Activated CD8-positive, alpha-beta T cell treated with anti-CD3 and anti-CD28 coated beads for 36 hours (primary cell): ENCODE measurements at regions of chr3 and their contacts with region 1.

Region 1: GRCh38 chr3:39216176-39216790 is 23.9 kb upstream of the XIRP1 start:
- DNase-seq: no peak
- ATAC-seq: no peak
- H3K4me3 Mint-ChIP-seq: no peak overlapping the region
- H3K27ac Mint-ChIP-seq: no peak overlapping the region
- H3K4me1 Mint-ChIP-seq: peaks cover 13% of the 10 kb centered on the region
- H3K27me3 Mint-ChIP-seq: peaks cover 6% of the 10 kb centered on the region
- CTCF ChIP-seq: no peak

Region 2: GRCh38 chr3:39196671-39197356 is 19.5 kb before region 1 on chr3:
- CTCF ChIA-PET with region 1: interaction called, 15 read pairs
- POLR2A ChIA-PET with region 1: no interaction called
- intact Hi-C with region 1: no loop called
- DNase-seq: no peak
- ATAC-seq: no peak
- H3K4me3 Mint-ChIP-seq: no peak overlapping the region
- H3K27ac Mint-ChIP-seq: no peak overlapping the region
- H3K4me1 Mint-ChIP-seq: peaks cover 15% of the 10 kb centered on the region
- H3K27me3 Mint-ChIP-seq: peaks cover 2% of the 10 kb centered on the region
- CTCF ChIP-seq: no peak

Region 3: DNA sequence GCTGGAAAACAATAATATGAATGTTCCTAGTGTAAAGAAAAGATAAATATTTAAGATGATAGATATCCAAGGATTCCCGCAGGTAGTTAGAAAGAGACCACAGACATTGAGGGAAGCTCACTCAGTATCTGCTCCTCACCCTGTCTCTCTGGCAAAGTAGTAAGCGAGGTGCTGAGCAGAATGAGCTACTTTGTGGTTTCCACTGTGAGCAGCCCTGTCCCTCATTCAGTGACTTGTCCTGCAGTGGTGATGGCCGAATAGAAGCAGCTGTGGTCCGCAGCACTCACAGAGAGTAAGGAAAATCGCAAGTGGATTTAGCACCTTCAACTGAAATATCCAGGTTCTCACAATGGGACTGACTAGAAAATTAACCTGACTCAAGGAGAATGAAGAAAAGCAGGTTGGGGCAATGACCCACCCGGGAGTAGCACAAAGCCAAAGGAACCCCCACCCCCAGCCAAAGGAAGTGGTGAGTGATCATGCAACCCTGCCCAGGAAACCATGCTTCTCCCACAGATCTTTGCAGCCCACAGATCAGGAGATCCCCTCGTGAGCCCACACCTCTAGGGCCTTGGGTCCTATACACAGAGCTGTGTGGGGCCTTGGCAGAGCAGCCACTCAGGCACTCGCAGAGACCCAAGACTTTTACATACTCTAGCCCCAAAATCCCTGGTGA is 145.1 kb after region 1 on chr3:
- CTCF ChIA-PET with region 1: no interaction called
- POLR2A ChIA-PET with region 1: no interaction called
- intact Hi-C with region 1: no loop called
- DNase-seq: peak; percentile 74
- ATAC-seq: peak; percentile 95
- H3K4me3 Mint-ChIP-seq: peak overlapping the region; percentile 5
- H3K27ac Mint-ChIP-seq: peak overlapping the region; percentile 77
- H3K4me1 Mint-ChIP-seq: peaks cover 39% of the 10 kb centered on the region
- H3K27me3 Mint-ChIP-seq: no peaks in the 10 kb centered on the region
- CTCF ChIP-seq: no peak